ENCODE measurements at regions of chr20 and their contacts with region 1.

Region 1: DNA sequence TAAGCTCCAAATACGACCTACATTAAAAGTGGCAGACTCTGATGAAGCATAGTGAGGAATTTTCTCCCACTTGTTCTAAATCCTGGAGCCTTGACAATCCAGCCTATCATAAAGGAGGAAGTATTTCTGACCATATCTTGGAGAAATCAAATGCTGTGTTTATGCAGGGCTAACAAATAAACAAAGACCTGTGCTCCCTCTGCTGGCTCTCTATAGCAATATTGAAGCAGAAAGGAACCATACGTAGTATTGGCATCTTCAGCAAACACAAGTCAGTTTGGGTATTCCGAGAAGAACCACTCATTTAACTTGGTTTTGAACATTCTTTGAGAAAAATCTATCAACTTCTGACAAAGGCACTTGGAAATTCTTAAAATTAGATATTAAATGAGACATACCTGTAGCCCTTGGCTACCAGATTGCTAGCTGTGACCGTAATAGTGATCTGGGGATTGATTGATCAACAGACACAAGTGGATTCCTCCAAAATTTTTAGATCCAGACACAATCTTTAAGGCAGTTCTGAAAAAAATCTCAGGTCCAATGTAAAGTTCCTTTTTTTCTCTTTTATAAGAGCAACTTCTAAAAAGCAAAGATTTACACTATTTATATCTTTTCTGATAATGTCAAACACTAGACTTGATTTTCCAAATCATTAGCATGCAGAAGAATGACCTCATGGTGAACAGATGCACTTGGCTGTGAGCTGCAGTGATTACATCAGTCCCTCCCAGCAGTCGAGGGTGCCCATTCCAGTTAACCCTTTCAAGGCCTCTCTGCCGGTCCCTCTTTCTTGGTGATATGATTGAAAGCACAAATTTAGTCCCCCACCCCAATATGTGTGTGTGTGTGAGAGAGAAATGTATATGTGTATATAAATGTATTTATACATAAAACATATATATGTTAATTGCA is 40.2 kb downstream of the INSM1 start:
- DNase-seq: peak; percentile 2
- H3K4me3 Mint-ChIP-seq: no peak overlapping the region
- H3K27ac Mint-ChIP-seq: no peak overlapping the region
- H3K4me1 Mint-ChIP-seq: no peaks in the 10 kb centered on the region
- H3K27me3 Mint-ChIP-seq: no peaks in the 10 kb centered on the region
- CTCF ChIP-seq: no peak

Region 2: GRCh38 chr20:20360464-20360863 is 47.7 kb before region 1 on chr20:
- CTCF ChIA-PET with region 1: interaction called, 4 read pairs
- POLR2A ChIA-PET with region 1: no interaction called
- intact Hi-C with region 1: loop called (anchors 5 kb)
- DNase-seq: peak; percentile 70
- H3K4me3 Mint-ChIP-seq: no peak overlapping the region
- H3K27ac Mint-ChIP-seq: no peak overlapping the region
- H3K4me1 Mint-ChIP-seq: peaks cover 22% of the 10 kb centered on the region
- H3K27me3 Mint-ChIP-seq: peaks cover 57% of the 10 kb centered on the region
- CTCF ChIP-seq: peak; percentile 69

Measured in MCF 10A (cell line).